ENCODE measurements at regions of chr6 and their contacts with region 1.

Region 1: GRCh38 chr6:25223490-25223991 is 55.6 kb upstream of the CARMIL1 start:
- DNase-seq: peak; percentile 59 to 71
- H3K4me3 ChIP-seq: no peak overlapping the region
- H3K27ac ChIP-seq: peak overlapping the region; percentile 20; the same call in 1 of the 2 replicates
- H3K4me1 ChIP-seq: peaks cover 7% of the 10 kb centered on the region; the same call in 1 of the 2 replicates
- H3K27me3 ChIP-seq: no peaks in the 10 kb centered on the region
- CTCF ChIP-seq: peak; percentile 95

Region 2: DNA sequence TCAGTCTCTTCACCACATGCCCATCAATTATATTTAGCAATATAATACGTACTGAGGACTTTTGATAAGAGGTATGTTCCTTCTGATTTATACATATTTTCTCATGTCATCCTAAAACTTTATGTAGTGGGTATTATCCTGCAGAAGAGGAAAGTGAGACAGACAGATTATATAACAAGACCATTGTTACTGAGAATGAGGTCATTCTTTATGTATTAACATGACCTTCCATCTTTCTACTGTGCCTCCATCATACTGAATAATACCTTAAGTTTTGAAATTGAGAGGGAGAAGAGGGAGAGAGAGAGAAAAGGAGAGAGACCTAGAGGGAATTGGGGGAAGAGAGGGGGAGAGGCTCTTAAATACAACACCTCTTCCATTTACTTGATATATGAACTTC is 35.3 kb before region 1 on chr6:
- CTCF ChIA-PET with region 1: no interaction called
- POLR2A ChIA-PET with region 1: no interaction called
- intact Hi-C with region 1: no loop called
- DNase-seq: no peak
- H3K4me3 ChIP-seq: no peak overlapping the region
- H3K27ac ChIP-seq: no peak overlapping the region
- H3K4me1 ChIP-seq: peaks cover 16% of the 10 kb centered on the region
- H3K27me3 ChIP-seq: no peaks in the 10 kb centered on the region
- CTCF ChIP-seq: no peak

Region 3: DNA sequence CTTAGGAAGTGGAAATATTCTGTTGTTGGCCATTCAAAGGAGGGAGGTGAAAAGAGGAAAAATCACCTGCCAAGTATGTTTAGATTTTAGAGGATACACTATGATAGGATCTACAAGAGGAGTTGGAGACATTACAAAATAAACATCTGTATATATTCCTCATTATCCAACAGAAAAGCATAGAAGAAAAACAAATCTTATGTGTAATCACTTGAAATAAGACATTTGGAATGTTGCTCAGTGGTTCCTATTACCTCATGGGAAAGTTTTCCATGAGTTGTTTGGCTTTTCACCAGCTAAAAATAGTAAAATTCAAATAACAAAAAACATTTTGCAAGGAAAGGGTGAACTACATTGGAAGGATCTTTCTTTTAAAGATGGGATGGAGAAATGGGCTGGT is 21.0 kb before region 1 on chr6:
- CTCF ChIA-PET with region 1: no interaction called
- POLR2A ChIA-PET with region 1: no interaction called
- intact Hi-C with region 1: no loop called
- DNase-seq: no peak
- H3K4me3 ChIP-seq: no peak overlapping the region
- H3K27ac ChIP-seq: no peak overlapping the region
- H3K4me1 ChIP-seq: no peaks in the 10 kb centered on the region
- H3K27me3 ChIP-seq: no peaks in the 10 kb centered on the region
- CTCF ChIP-seq: no peak

Region 4: GRCh38 chr6:25263657-25264056 is 40.1 kb after region 1 on chr6:
- CTCF ChIA-PET with region 1: interaction called, 12 read pairs
- POLR2A ChIA-PET with region 1: no interaction called
- intact Hi-C with region 1: loop called (anchors 1 kb)
- DNase-seq: no peak
- H3K4me3 ChIP-seq: no peak overlapping the region
- H3K27ac ChIP-seq: no peak overlapping the region
- H3K4me1 ChIP-seq: no peaks in the 10 kb centered on the region
- H3K27me3 ChIP-seq: no peaks in the 10 kb centered on the region
- CTCF ChIP-seq: no peak

Region 5: DNA sequence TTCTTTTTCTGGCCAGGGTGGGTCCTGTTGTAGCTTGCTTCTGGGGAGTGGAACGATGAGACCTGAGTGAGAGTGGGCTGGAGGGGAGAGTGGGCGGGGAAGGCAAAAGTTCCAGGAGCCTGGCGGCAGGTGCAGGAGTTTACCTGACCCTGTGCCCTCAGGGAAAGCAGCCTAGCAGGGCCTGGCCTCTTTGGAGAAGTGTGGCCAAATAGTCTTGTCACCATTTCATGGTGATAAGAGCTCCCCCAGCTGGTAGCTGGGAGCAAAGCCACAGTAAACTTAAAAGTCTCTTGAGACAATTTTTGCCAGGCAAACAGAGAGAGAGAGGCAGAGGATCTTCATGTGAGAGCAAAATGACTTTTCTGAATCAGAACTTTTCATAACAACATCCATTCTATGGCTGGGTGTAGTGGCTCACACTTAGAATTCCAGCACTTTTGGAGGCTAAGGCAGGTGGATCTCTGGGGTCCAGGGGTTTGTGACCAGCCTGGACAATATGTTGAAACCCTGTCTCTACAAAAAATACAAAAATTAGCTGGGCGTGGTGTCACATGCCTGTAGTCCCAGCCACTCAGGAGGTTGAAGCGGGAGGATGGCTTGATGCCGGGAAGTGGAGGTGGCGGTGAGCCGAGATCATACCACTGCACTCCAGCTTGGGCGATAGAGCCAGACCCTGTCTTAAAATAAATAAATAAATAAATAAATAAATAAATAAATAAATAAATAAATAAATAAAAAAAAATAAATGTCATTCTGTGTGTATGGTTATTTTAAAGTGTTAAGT is 266.7 kb after region 1 on chr6:
- CTCF ChIA-PET with region 1: interaction called, 10 read pairs
- POLR2A ChIA-PET with region 1: no interaction called
- intact Hi-C with region 1: loop called (anchors 1 kb)
- DNase-seq: peak; percentile 68 to 73
- H3K4me3 ChIP-seq: no peak overlapping the region
- H3K27ac ChIP-seq: no peak overlapping the region
- H3K4me1 ChIP-seq: peaks cover 4% of the 10 kb centered on the region
- H3K27me3 ChIP-seq: no peaks in the 10 kb centered on the region
- CTCF ChIP-seq: peak; percentile 85

Region 6: DNA sequence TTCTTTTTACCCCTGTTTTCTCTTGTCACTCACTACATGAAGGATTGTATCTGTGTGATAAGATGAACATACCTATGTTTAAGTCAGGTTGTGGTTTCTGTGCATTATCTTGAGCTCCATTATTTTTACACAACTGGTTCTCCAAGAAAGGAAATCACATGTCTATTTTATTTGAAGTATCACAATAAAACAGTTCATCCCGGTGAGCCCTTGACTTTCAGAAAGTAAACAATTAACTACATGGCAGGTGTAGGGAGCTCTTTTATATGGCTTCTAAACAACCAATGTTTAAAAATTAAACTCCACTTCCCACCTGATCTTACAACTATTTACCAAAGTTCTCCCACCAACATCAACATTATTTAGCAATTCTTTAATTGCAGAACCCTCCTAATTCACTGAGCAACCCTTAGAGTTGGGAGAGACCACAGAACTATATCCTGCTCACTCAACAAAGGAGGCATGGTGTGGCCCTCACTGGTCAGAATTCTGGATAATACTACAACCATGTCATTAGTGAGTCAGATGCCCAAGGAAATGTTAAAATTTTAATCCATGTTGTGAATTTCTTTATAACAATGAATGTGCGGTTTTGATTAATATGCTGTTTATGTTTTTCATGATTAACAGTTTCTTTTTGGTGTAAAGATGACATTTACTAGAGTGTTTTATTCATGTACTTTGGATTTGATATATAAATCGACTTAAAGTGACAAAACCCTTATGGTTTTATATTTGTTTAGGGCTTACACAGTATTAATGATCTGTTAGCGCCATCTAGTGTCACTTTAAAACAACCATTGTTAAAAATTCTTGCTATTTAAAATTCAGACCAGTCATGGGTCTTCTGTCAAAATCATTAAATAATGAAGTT is 378.5 kb after region 1 on chr6:
- CTCF ChIA-PET with region 1: no interaction called
- POLR2A ChIA-PET with region 1: no interaction called
- intact Hi-C with region 1: loop called (anchors 1 kb)
- DNase-seq: peak in 1 of 2 experiments; percentile 43
- H3K4me3 ChIP-seq: no peak overlapping the region
- H3K27ac ChIP-seq: no peak overlapping the region
- H3K4me1 ChIP-seq: no peaks in the 10 kb centered on the region
- H3K27me3 ChIP-seq: no peaks in the 10 kb centered on the region
- CTCF ChIP-seq: peak; percentile 85

Region 7: GRCh38 chr6:25889877-25890853 is 666.6 kb after region 1 on chr6:
- CTCF ChIA-PET with region 1: interaction called, 5 read pairs
- POLR2A ChIA-PET with region 1: no interaction called
- intact Hi-C with region 1: loop called (anchors 2 kb)
- DNase-seq: peak; percentile 42
- H3K4me3 ChIP-seq: no peak overlapping the region
- H3K27ac ChIP-seq: no peak overlapping the region
- H3K4me1 ChIP-seq: no peaks in the 10 kb centered on the region
- H3K27me3 ChIP-seq: no peaks in the 10 kb centered on the region
- CTCF ChIP-seq: peak; percentile 72

Region 8: GRCh38 chr6:26003102-26003694 is 779.7 kb after region 1 on chr6:
- CTCF ChIA-PET with region 1: no interaction called
- POLR2A ChIA-PET with region 1: no interaction called
- intact Hi-C with region 1: loop called (anchors 5 kb)
- DNase-seq: peak in 1 of 2 experiments; percentile 61
- H3K4me3 ChIP-seq: no peak overlapping the region
- H3K27ac ChIP-seq: no peak overlapping the region
- H3K4me1 ChIP-seq: no peaks in the 10 kb centered on the region
- H3K27me3 ChIP-seq: no peaks in the 10 kb centered on the region
- CTCF ChIP-seq: peak; percentile 87